ENCODE measurements at regions of chr1 and their contacts with region 1.

Region 1: GRCh38 chr1:160046494-160047110 is 14.8 kb upstream of the PIGM start:
- DNase-seq: peak; percentile 26 to 62 (median 39)
- H3K4me3 ChIP-seq: no peak overlapping the region
- H3K27ac ChIP-seq: no peak overlapping the region
- H3K4me1 ChIP-seq: peaks cover 0 to 5% of the 10 kb centered on the region in 2 donors
- H3K27me3 ChIP-seq: no peaks in the 10 kb centered on the region
- CTCF ChIP-seq: peak; percentile 48 to 68 (median 64)
- POLR2A ChIP-seq: no peak

Region 2: DNA sequence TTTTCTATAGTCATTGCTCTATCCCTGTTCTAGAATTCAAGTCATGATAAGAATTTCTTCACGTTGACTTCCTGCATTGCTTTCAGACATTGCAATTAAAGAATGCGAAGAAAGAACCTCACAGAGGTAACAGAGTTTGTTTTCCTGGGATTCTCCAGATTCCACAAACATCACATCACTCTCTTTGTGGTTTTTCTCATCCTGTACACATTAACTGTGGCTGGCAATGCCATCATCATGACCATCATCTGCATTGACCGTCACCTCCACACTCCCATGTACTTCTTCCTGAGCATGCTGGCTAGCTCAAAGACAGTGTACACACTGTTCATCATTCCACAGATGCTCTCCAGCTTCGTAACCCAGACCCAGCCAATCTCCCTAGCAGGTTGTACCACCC is 448.4 kb before region 1 on chr1:
- intact Hi-C with region 1: no loop called
- DNase-seq: no peak
- H3K4me3 ChIP-seq: no peak overlapping the region
- H3K27ac ChIP-seq: no peak overlapping the region
- H3K4me1 ChIP-seq: no peaks in the 10 kb centered on the region
- H3K27me3 ChIP-seq: no peaks in the 10 kb centered on the region
- CTCF ChIP-seq: no peak
- POLR2A ChIP-seq: no peak

Region 3: DNA sequence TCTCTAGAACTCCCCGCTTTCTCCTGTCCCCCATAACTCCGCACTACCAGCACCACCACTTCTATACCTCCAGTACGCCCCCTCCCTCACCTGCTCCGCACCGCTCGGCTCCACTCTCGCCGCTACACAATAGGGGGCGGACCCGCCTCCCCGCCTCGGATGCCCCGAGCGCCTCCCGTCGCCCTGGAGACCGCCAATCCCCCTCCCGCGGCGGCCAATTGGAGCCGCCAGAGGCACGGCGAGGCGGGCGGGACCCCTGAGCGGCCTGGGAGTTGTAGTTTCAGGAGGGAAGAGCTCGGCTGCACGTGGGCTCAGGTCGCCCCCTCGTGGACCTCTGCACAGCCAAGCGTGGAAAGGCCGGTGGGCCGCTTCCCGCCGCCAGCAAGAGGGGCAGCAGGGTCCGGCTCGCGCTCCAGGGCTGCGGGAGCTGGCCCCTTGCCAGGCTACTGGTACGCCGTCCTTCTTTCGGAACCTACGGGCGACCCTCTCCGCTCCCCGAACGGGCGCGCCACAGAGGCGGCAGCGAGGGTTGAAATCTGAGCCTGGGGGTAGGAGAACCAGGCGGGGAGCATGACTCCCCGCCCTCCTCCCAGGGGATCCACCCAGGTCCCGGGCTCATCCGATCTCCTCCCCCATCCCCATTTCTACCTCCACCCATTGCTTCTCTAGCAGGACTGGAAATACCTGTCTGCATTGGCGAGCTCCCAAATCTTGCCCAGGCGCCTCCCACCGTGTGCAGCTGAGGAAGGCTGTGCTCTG is 100.9 kb before region 1 on chr1 and contains the start of gene IGSF9:
- intact Hi-C with region 1: no loop called
- DNase-seq: peak in 6 of 7 donors; percentile 48 to 75 (median 52)
- H3K4me3 ChIP-seq: peak within 1 kb of the TSS in 1 of 4 donors; percentile 49
- H3K27ac ChIP-seq: no peak within 1 kb of the TSS
- H3K4me1 ChIP-seq: peaks cover 0 to 10% of the 10 kb centered on the region in 2 donors
- H3K27me3 ChIP-seq: peaks cover 19% of the 10 kb centered on the region
- CTCF ChIP-seq: peak in 3 of 6 experiments; percentile 10 to 44 (median 25)
- POLR2A ChIP-seq: no peak
- total RNA-seq, gene IGSF9: 0.14 to 0.32 (median 0.22) TPM in 4 of 9 donors, not detected in the others

Region 4: DNA sequence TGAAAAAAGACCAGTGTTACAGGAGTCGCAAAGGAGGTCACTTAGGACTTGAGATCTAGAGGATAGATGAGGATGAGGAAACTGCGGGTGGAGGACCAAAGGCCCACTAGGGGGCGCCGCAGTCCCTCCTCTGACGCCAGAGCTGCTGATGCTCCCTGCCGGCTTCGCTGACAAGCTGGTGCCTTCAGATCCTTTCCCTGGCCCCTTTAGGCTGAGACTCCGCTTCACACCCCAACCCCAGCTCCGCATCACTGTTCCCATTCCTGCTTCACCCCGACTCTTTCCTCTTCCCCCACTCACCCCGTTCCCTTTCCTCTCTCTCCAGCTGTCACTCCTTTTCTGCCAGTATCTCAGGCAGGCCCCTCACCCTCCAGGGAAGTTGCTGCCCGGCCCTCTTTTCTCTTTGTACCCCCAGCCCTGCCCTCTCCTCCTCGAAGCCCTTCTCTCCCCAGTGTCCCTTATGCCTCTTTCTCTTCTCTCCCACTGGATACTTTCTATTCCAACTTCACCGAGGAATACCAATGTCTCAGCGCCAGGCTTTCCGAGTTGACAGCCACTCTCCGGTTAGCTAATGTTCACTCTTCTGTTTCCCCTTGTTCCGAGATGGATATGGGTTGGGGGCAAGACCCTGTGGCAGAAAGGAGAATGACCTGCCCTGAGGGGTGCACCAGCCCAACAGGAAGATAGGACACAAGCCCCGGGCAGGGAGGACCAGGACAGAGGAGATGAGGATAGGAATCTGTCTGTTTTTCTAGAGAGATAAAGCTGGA is 39.3 kb after region 1 on chr1:
- intact Hi-C with region 1: loop called in 1 of 2 experiments (anchors 2 kb)
- DNase-seq: peak; percentile 65 to 91 (median 84)
- H3K4me3 ChIP-seq: no peak overlapping the region
- H3K27ac ChIP-seq: no peak overlapping the region
- H3K4me1 ChIP-seq: peaks cover 0 to 4% of the 10 kb centered on the region in 2 donors
- H3K27me3 ChIP-seq: peaks cover 21% of the 10 kb centered on the region
- CTCF ChIP-seq: peak; percentile 60 to 87 (median 71)
- POLR2A ChIP-seq: no peak

Measured in adrenal gland (tissue), 19 donors.